MCF 10A (cell line): ENCODE measurements at regions of chr1 and their contacts with region 1.

Region 1: GRCh38 chr1:214416417-214416816 is 135.0 kb downstream of the PTPN14 start:
- DNase-seq: peak; percentile 80
- H3K4me3 Mint-ChIP-seq: no peak overlapping the region
- H3K27ac Mint-ChIP-seq: peak overlapping the region; percentile 69
- H3K4me1 Mint-ChIP-seq: peaks cover 67% of the 10 kb centered on the region
- H3K27me3 Mint-ChIP-seq: no peaks in the 10 kb centered on the region
- CTCF ChIP-seq: no peak

Region 2: DNA sequence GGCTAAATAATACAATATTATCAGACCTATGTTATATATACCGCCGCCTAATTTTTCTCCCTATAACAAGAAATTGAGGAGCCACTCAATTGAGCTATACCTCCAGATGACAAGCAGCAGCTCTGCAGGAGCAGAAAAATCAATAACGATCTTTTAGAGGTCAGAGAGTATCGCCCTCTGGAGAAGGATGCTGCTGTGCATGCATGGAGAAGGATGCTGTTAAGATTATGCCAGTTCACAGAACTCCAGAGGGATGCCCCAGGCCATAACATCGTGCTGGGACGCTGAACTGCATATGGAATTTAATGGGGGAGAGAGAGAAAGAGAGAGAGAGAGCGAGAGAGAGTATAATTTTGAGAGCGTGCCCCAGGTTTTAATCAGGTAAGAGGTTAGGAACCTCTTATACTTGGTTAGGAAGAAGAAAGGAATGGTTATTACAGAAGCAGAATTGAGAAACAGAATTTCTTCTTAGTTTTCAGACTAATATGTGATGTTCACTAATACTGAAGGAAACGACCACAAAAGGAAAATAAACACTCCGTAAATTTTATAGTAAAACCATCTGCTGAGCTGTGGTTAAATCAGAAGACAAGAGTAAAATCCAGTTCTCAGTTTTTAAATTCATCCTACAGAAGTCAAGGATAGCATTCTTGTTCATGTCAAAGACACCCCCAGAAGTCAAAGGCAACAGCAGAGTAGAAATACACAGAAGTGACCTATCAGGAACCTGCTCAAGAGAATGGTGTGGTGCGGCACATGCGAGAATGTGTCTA is 24.4 kb before region 1 on chr1:
- CTCF ChIA-PET with region 1: interaction called, 10 read pairs
- POLR2A ChIA-PET with region 1: interaction called, 7 read pairs
- intact Hi-C with region 1: no loop called
- DNase-seq: no peak
- H3K4me3 Mint-ChIP-seq: no peak overlapping the region
- H3K27ac Mint-ChIP-seq: no peak overlapping the region
- H3K4me1 Mint-ChIP-seq: peaks cover 16% of the 10 kb centered on the region
- H3K27me3 Mint-ChIP-seq: no peaks in the 10 kb centered on the region
- CTCF ChIP-seq: no peak

Region 3: GRCh38 chr1:214404154-214404553 is 12.3 kb before region 1 on chr1:
- CTCF ChIA-PET with region 1: interaction called, 14 read pairs
- POLR2A ChIA-PET with region 1: interaction called, 68 read pairs
- intact Hi-C with region 1: no loop called
- DNase-seq: peak; percentile 40
- H3K4me3 Mint-ChIP-seq: no peak overlapping the region
- H3K27ac Mint-ChIP-seq: peak overlapping the region; percentile 20
- H3K4me1 Mint-ChIP-seq: peaks cover 24% of the 10 kb centered on the region
- H3K27me3 Mint-ChIP-seq: no peaks in the 10 kb centered on the region
- CTCF ChIP-seq: no peak

Region 4: GRCh38 chr1:214427871-214428277 is 11.5 kb after region 1 on chr1:
- CTCF ChIA-PET with region 1: interaction called, 7 read pairs
- POLR2A ChIA-PET with region 1: interaction called, 32 read pairs
- intact Hi-C with region 1: no loop called
- DNase-seq: peak; percentile 97
- H3K4me3 Mint-ChIP-seq: peak overlapping the region; percentile 15
- H3K27ac Mint-ChIP-seq: peak overlapping the region; percentile 82
- H3K4me1 Mint-ChIP-seq: peaks cover 63% of the 10 kb centered on the region
- H3K27me3 Mint-ChIP-seq: no peaks in the 10 kb centered on the region
- CTCF ChIP-seq: no peak

Region 5: GRCh38 chr1:214446772-214447556 is 30.5 kb after region 1 on chr1:
- CTCF ChIA-PET with region 1: interaction called, 4 read pairs
- POLR2A ChIA-PET with region 1: interaction called, 143 read pairs
- intact Hi-C with region 1: no loop called
- DNase-seq: peak; percentile 97
- H3K4me3 Mint-ChIP-seq: peak overlapping the region; percentile 26
- H3K27ac Mint-ChIP-seq: peak overlapping the region; percentile 81
- H3K4me1 Mint-ChIP-seq: peaks cover 59% of the 10 kb centered on the region
- H3K27me3 Mint-ChIP-seq: no peaks in the 10 kb centered on the region
- CTCF ChIP-seq: no peak

Region 6: DNA sequence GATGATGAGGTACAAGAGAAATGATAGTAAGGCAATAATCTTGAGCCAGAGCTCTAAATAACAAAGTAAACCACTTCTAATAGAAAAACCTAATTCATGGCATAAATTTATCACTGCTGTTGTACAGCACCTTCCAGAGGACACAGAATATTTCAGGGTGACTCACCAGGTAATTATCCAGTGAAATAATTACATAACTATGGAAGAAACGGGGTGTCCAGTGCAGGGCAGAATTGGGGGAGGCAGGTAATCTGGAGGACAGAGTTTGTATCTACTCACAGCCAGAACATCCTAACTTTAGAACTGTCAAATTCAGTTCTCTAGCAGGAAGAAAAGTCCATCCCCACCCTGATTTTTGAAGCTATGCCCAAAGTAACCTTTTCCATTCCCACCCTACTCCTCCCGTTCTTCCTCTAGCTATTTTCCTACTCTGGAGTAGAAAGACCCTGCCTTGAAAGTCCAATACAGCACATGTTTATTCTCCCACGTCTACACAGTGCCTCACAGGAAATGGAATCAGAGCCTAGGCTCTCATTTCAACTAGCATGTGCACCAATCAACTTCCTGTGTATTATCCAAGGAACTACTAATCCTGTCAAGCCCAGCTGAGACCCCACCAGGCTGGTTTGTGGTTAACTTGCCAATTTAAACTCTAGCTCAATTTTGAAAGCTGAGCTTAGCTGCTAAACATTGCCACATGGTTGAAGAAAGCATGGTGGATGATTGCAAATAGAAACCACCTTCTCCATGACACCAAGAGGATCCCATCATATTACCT is 38.4 kb after region 1 on chr1:
- CTCF ChIA-PET with region 1: interaction called, 16 read pairs
- POLR2A ChIA-PET with region 1: interaction called, 43 read pairs
- intact Hi-C with region 1: no loop called
- DNase-seq: peak; percentile 60
- H3K4me3 Mint-ChIP-seq: no peak overlapping the region
- H3K27ac Mint-ChIP-seq: peak overlapping the region; percentile 42
- H3K4me1 Mint-ChIP-seq: peaks cover 66% of the 10 kb centered on the region
- H3K27me3 Mint-ChIP-seq: no peaks in the 10 kb centered on the region
- CTCF ChIP-seq: no peak

Region 7: GRCh38 chr1:214466403-214467077 is 50.1 kb after region 1 on chr1:
- CTCF ChIA-PET with region 1: interaction called, 5 read pairs
- POLR2A ChIA-PET with region 1: interaction called, 112 read pairs
- intact Hi-C with region 1: loop called (anchors 10 kb)
- DNase-seq: peak; percentile 54
- H3K4me3 Mint-ChIP-seq: peak overlapping the region; percentile 37
- H3K27ac Mint-ChIP-seq: peak overlapping the region; percentile 88
- H3K4me1 Mint-ChIP-seq: peaks cover 65% of the 10 kb centered on the region
- H3K27me3 Mint-ChIP-seq: no peaks in the 10 kb centered on the region
- CTCF ChIP-seq: no peak

Region 8: GRCh38 chr1:214864896-214865688 is 448.7 kb after region 1 on chr1:
- CTCF ChIA-PET with region 1: no interaction called
- POLR2A ChIA-PET with region 1: no interaction called
- intact Hi-C with region 1: no loop called
- DNase-seq: peak; percentile 97
- H3K4me3 Mint-ChIP-seq: peak overlapping the region; percentile 17
- H3K27ac Mint-ChIP-seq: peak overlapping the region; percentile 37
- H3K4me1 Mint-ChIP-seq: peaks cover 49% of the 10 kb centered on the region
- H3K27me3 Mint-ChIP-seq: no peaks in the 10 kb centered on the region
- CTCF ChIP-seq: no peak